Motor neuron (in vitro differentiated cells): ENCODE measurements at regions of chr10 and their contacts with region 1.

Region 1: DNA sequence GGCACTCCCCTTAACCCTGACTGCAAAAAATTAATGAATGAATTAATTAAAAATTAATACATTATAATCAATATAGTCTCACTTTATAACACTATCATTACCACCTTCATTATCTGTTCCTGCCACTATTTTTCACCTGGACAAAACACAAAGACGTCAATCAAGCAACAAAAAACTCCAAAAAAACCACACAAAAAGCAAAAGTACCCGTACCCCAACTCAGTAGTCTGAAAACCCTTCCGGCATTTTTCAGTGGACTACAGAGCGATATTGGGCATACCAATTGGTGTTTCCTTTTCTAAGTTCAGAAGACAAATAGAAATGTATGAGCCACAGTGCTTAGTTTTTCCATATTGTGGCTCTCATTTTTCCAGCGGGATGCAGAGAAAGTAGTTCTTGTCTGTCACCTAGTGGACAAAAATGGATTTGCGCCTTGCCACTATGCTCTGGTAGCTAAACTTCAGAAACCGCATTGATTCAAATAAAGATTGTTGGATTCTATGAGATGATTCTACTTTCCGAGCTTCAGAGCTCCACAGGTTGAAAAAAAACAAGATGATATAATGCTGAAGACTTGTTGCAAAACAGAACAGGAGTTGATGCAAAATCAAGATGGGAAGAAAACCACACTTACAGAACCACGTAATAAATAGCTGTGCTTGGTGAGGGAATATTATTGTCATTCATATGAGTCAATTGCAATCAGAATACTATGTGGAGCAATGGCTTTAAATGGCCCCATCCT is 50.6 kb upstream of the ITGB1 start:
- ATAC-seq: peak in 3 of 8 experiments; percentile 1 to 16 (median 5)
- H3K4me3 ChIP-seq: no peak overlapping the region
- H3K27ac ChIP-seq: no peak overlapping the region
- H3K4me1 ChIP-seq: peaks cover 0 to 5% of the 10 kb centered on the region in 2 donors

Region 2: DNA sequence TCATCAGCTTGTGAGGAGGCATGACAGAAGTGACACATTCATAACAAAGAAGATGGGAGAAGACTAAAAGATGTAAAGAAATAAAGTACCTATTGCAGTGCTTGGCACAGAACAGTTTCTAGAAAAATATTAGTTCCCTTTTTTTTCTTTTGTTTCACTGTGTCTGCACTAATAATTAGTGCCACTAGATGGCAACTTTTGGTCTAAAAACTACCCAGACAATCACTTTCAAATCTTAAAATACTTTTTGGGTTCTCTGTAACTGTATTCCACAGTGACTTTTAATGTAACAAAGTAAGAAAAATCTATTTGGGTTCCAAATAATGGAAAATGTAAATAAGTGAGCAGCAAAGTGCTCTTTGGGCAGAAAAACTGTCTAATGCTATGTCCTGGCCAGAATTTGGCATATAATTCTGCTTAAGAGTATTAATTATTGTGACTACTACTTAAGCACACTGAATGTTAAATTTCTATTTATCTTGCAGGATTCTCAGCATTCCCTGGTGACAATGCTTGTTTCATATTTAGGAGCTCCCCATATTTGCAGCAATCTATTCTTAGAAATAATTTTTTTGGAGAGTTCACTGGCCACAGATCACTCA is 817.7 kb before region 1 on chr10:
- in situ Hi-C with region 1: loop called in 1 of 9 experiments (anchors 25 kb)
- ATAC-seq: no peak
- H3K4me3 ChIP-seq: no peak overlapping the region
- H3K27ac ChIP-seq: no peak overlapping the region
- H3K4me1 ChIP-seq: no peaks in the 10 kb centered on the region

Region 3: GRCh38 chr10:32795598-32796183 is 213.0 kb before region 1 on chr10:
- in situ Hi-C with region 1: loop called in 7 of 9 experiments (anchors 10 to 25 kb)
- ATAC-seq: peak in 4 of 8 experiments; percentile 25 to 52 (median 34)
- H3K4me3 ChIP-seq: no peak overlapping the region
- H3K27ac ChIP-seq: no peak overlapping the region
- H3K4me1 ChIP-seq: no peaks in the 10 kb centered on the region

Region 4: DNA sequence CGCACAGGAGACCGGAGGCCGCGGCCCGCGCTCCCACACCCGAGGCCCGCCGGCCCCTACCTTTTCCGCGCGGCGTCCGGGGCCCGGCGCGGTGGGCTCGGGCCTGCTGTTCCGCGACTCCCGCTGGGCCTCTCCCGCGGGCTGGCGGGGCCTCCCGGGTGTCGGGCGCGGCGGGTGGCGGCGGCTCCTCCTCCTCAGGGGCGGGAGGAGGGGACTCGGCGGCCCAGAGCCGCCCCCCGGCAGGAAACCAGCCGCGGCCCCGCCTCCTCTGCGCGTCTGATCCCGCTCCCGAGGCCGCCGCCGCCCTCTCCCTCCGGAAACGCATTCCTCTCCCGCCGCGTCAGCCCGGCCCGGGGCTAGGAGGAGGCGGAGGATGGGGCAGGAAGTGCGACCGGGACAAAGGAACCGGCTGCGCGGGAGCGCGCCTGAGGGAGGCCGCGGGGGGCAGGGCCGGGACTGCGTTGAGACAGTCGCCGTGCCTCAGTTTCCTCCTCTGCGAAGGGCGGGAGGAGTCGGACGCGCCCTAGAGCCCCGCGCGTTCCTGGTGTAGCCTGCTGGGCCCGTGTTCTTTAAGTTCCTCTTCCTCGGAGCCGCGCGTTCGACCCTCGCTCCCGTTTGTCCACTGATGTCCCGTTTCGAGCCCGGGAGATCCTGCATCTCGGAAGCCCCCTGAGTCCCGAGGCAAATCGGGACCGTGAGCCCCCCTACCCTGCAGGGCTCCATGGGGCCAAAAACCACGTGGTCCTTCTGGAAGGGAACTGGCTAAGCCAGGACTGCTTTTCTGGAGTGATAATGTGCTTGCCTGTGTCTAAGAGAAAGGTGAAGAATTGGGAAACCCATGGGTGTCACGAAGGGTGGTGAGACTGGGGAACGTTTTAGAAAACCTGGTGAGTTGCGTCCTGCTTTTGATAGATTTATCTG is 50.3 kb before region 1 on chr10 and contains the start of gene ITGB1:
- in situ Hi-C with region 1: loop called in 1 of 9 experiments (anchors 10 kb)
- ATAC-seq: peak; percentile 70 to 95 (median 93)
- H3K4me3 ChIP-seq: peak within 1 kb of the TSS; percentile 69 to 81 (median 74)
- H3K27ac ChIP-seq: peak within 1 kb of the TSS; percentile 95 to 97
- H3K4me1 ChIP-seq: peaks cover 19 to 38% of the 10 kb centered on the region in 2 donors
- total RNA-seq, gene ITGB1: 112 to 1,583 (median 288) TPM

Region 5: GRCh38 chr10:33132626-33133025 is 124.0 kb after region 1 on chr10:
- in situ Hi-C with region 1: no loop called
- ATAC-seq: peak in 1 of 8 experiments; percentile 54
- H3K4me3 ChIP-seq: no peak overlapping the region
- H3K27ac ChIP-seq: no peak overlapping the region
- H3K4me1 ChIP-seq: peaks cover 16 to 26% of the 10 kb centered on the region in 2 donors